GM12878 (cell line): ENCODE measurements at regions of chrX and their contacts with region 1.

Region 1: DNA sequence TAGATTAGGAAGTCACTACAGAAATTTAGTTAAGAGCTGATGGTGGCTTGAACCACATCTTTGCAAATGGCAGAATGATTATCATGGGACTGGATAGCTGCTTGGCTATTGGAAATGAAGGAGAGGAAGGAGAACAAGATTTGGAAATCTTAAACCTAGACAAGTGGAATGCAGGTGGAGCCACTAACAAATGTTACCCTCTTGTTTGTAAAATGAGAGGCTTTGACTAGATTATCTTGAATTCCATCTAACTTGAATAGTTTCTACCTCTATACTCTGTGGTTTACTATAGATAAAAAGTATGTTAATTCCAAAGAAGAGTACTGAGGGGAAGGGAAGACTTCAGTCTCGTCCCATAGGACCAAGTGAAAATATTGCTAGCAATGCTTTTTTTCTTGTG is 49.1 kb downstream of the DIAPH2 start:
- DNase-seq: no peak
- ATAC-seq: no peak
- H3K4me3 ChIP-seq: no peak overlapping the region
- H3K27ac ChIP-seq: no peak overlapping the region
- H3K4me1 ChIP-seq: no peaks in the 10 kb centered on the region
- H3K27me3 ChIP-seq: no peaks in the 10 kb centered on the region
- CTCF ChIP-seq: no peak
- EP300 ChIP-seq: no peak
- POLR2A ChIP-seq: no peak
- RAD21 ChIP-seq: no peak

Region 2: GRCh38 chrX:96692454-96692853 is 41.2 kb before region 1 on chrX:
- CTCF ChIA-PET with region 1: no interaction called
- POLR2A ChIA-PET with region 1: no interaction called
- RAD21 ChIA-PET with region 1: no interaction called
- SMC1A ChIA-PET with region 1: no interaction called
- in situ Hi-C with region 1: no loop called
- intact Hi-C with region 1: no loop called
- DNase-seq: no peak
- ATAC-seq: no peak
- H3K4me3 ChIP-seq: no peak overlapping the region
- H3K27ac ChIP-seq: no peak overlapping the region
- H3K4me1 ChIP-seq: no peaks in the 10 kb centered on the region
- H3K27me3 ChIP-seq: no peaks in the 10 kb centered on the region
- CTCF ChIP-seq: no peak
- EP300 ChIP-seq: no peak
- POLR2A ChIP-seq: no peak
- RAD21 ChIP-seq: no peak

Region 3: DNA sequence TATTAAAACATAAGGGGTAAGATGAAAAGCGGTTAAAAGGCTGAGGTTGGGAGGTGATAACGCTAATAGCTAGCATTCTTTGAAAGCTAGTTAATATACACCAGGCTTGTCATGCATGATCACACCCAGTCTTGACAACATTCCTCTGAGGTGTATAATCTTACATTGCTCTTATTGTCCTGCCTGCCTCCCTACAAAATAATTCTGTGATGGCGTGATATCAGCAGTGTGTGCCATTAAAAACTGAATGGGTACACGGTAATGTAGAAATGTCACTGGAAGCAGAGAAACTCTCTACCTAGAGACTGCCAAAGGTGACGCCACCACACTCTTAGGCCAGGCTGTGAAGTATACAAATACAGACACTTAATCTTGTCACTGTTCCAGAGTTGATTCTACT is 19.1 kb after region 1 on chrX:
- CTCF ChIA-PET with region 1: interaction called, 6 read pairs
- POLR2A ChIA-PET with region 1: no interaction called
- RAD21 ChIA-PET with region 1: no interaction called
- SMC1A ChIA-PET with region 1: interaction called, 10 read pairs
- in situ Hi-C with region 1: no loop called
- intact Hi-C with region 1: no loop called
- DNase-seq: no peak
- ATAC-seq: no peak
- H3K4me3 ChIP-seq: no peak overlapping the region
- H3K27ac ChIP-seq: no peak overlapping the region
- H3K4me1 ChIP-seq: no peaks in the 10 kb centered on the region
- H3K27me3 ChIP-seq: no peaks in the 10 kb centered on the region
- CTCF ChIP-seq: no peak
- EP300 ChIP-seq: no peak
- POLR2A ChIP-seq: no peak
- RAD21 ChIP-seq: no peak